Posterior cingulate gyrus (tissue), 11 donors: ENCODE measurements at regions of chr2 and their contacts with region 1.

Region 1: DNA sequence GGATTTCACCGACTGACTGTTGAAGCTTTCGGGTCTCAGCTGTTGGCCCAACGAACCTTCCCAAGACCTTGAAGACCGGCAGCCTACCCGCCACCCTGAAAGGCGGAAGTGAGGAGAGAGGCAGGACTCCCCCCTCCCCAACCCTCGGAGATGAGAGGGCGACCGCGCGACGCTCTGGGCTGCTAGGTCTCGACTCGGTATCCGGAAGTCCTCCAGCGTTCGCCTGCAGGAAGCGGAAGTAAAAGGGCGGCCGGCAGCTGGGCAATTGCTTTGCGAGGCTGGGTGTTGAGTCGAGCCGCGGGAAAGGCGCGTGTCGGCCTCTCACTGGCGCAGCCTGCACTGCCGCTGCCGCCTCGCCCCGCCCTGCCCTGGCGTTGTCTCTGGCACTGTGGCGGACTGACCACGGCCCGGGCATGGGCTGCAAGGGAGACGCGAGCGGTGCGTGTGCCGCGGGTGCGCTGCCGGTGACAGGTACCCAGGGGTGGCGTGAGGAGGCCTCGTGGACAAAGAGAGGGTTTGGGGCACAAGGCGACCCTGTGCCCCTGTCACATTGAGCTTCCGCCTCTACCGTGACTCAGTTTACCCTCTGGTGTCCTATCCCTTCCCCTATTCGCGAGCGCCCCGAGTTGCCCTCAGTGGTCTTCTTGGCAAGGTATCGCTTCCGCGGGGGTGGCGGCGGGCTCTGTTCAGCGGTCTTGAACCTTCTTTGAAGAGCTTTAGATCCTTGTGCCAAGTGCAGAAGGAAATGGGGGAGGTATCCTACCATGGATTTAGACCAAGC is at the start of gene UGGT1:
- DNase-seq: peak; percentile 91 to 99 (median 94)

Region 2: DNA sequence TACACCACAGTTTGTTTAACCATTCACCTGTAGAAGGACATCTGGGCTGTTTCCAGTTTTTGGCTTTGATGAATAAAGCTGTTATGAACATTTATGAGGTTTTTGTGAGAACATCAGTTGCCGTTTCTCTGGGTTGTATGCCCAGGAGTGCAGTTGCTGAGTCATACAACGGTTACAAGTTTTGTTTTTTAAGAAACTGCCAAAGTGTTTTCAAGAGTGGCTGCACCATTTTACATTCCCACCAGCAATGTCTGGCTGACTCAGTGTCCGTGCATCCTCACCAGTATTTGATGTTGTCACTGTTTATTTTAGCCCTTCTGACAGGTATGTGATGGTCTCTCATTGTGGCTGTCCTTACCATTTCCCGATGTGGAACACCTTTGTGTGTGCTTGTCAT is 493.2 kb before region 1 on chr2:
- intact Hi-C with region 1: no loop called
- DNase-seq: no peak

Region 3: DNA sequence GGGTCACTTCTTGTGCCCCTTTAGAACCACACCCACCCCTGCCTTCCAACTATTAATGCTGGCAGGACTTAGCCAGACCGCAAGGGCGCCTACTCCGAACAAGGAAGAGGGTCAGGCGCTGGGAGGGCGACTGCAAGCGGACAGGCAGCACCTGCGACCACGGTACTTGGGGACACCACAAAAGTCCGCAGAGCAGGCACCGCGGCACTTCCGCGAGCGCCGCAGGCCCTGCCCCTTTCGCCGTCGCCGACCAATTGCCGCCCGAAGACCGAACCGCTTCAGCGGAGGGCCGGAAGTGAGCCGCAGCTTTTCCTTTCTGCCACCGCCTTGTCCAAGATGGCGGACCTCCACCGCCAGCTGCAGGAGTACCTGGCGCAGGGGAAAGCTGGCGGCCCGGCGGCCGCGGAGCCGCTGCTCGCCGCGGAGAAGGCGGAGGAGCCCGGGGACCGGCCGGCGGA is 389.9 kb before region 1 on chr2 and contains the start of gene SFT2D3:
- intact Hi-C with region 1: loop called (anchors 10 kb)
- DNase-seq: peak; percentile 88 to 99 (median 92)

Region 4: GRCh38 chr2:127884436-127885345 is 206.4 kb before region 1 on chr2:
- intact Hi-C with region 1: loop called (anchors 10 kb)
- DNase-seq: peak in 1 of 10 donors; percentile 43

Region 5: GRCh38 chr2:127953128-127953718 is 137.9 kb before region 1 on chr2:
- intact Hi-C with region 1: no loop called
- DNase-seq: peak in 3 of 10 donors; percentile 13 to 20 (median 17)

Region 6: DNA sequence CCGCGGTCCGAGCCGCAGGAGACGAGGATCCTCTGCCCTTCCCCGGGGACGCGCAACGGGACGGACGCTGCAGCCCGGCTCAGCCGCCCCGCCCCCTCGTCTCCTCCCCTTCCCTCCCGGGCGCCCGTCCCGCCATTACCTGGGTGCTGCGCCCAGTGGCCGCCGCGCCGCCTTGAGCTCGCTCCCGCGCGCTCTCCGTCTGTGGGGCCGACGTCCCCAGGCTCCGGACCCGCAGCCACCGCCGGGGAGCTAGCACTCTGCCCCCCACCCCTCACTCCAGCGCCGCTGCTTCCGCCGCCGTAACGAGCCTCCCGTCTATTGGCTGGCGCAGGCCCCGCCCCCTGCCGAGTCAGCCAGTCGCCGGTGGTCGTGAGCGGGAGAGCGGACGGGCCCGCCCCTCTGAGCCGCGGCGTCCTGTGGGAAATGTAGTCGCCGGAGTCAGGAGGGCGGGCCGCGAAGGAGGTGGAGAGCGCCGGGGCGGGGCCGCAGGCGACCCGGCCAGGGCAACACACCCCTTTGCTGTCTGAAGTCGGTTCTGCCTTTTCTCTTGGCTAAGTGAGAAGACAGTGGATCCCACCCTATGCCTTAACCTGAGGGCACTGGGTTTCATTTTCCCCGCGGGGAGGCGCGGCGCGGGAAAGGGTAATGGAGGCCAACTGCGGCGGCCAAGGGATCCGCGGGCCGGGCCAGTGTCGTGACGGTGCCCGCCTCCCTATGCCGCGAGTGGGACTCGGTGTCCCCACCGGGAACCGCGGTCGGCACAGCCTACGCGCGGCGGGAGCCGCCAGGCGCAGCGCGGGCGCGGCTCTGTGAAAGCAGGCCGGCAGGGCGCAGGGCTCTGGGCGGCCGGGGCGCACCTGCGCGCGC is 63.1 kb before region 1 on chr2 and contains the start of gene SAP130:
- intact Hi-C with region 1: loop called (anchors 2 kb)
- DNase-seq: peak; percentile 98 to 100 (median 99)

Region 7: GRCh38 chr2:128260239-128261138 is 169.4 kb after region 1 on chr2:
- intact Hi-C with region 1: no loop called
- DNase-seq: peak; percentile 55 to 95 (median 71)